ENCODE measurements at regions of chr14 and their contacts with region 1.

Region 1: GRCh38 chr14:54566410-54567223 is at the start of gene SAMD4A:
- DNase-seq: peak; percentile 92
- H3K4me3 ChIP-seq: peak within 1 kb of the TSS; percentile 87
- H3K27ac ChIP-seq: peak within 1 kb of the TSS; percentile 77
- H3K4me1 ChIP-seq: peaks cover 28% of the 10 kb centered on the region
- H3K27me3 ChIP-seq: no peaks in the 10 kb centered on the region
- CTCF ChIP-seq: peak; percentile 44
- total RNA-seq, gene SAMD4A: 19.8 and 26.5 TPM in 2 replicates

Region 2: GRCh38 chr14:54366736-54367735 is 199.6 kb before region 1 on chr14:
- CTCF ChIA-PET with region 1: no interaction called
- POLR2A ChIA-PET with region 1: no interaction called
- intact Hi-C with region 1: loop called (anchors 5 kb)
- DNase-seq: peak; percentile 72
- H3K4me3 ChIP-seq: no peak overlapping the region
- H3K27ac ChIP-seq: no peak overlapping the region
- H3K4me1 ChIP-seq: peaks cover 11% of the 10 kb centered on the region
- H3K27me3 ChIP-seq: no peaks in the 10 kb centered on the region
- CTCF ChIP-seq: peak; percentile 71

Region 3: DNA sequence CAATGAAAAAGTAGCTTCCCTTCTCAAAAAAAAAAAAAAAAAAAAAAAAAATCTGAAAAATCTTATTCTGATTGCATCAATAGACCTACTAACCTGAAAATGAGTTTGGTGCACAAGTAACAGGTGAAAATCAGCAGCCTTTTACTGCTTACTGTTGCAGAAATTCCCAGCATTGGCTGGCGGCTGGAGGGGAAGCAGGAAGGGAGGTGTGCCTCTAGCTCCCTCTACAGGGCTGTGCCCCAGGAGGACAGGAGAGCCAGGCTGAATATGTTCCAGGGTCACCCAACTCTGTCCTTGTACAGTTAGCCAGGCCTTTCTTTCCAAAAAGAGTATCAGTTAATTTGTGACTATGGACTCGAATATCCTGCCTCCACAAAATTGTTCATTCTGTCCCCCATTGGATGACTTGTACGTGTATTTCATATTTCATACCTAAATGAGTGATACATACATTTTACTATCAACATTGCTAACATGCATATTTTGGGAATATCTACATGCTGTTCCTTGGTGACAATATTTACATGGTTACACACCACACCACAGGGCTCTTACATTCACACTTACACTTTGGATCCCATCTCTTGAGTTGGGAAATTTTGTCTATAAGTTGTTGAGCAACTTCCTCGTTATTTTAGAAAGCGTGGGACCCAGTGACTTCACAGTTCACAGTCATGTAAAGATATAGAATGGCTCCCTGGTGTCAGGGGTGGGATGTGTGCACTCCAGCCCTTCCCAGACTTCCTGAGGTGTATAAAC is 125.1 kb after region 1 on chr14:
- CTCF ChIA-PET with region 1: interaction called, 11 read pairs
- POLR2A ChIA-PET with region 1: no interaction called
- intact Hi-C with region 1: loop called (anchors 1 kb)
- DNase-seq: peak; percentile 74
- H3K4me3 ChIP-seq: no peak overlapping the region
- H3K27ac ChIP-seq: no peak overlapping the region
- H3K4me1 ChIP-seq: no peaks in the 10 kb centered on the region
- H3K27me3 ChIP-seq: no peaks in the 10 kb centered on the region
- CTCF ChIP-seq: peak; percentile 90

Region 4: GRCh38 chr14:54773171-54773975 is 206.8 kb after region 1 on chr14:
- CTCF ChIA-PET with region 1: interaction called, 48 read pairs
- POLR2A ChIA-PET with region 1: no interaction called
- intact Hi-C with region 1: loop called (anchors 1 kb)
- DNase-seq: peak; percentile 97
- H3K4me3 ChIP-seq: no peak overlapping the region
- H3K27ac ChIP-seq: peak overlapping the region; percentile 70
- H3K4me1 ChIP-seq: peaks cover 27% of the 10 kb centered on the region
- H3K27me3 ChIP-seq: no peaks in the 10 kb centered on the region
- CTCF ChIP-seq: peak; percentile 64

Region 5: GRCh38 chr14:54981698-54982097 is 415.1 kb after region 1 on chr14:
- CTCF ChIA-PET with region 1: no interaction called
- POLR2A ChIA-PET with region 1: no interaction called
- intact Hi-C with region 1: loop called (anchors 10 kb)
- DNase-seq: peak; percentile 11
- H3K4me3 ChIP-seq: no peak overlapping the region
- H3K27ac ChIP-seq: no peak overlapping the region
- H3K4me1 ChIP-seq: no peaks in the 10 kb centered on the region
- H3K27me3 ChIP-seq: no peaks in the 10 kb centered on the region
- CTCF ChIP-seq: no peak; the same call in 1 of the 2 replicates